ENCODE measurements at regions of chr20 and their contacts with region 1.

Region 1: GRCh38 chr20:34768096-34768495 is 57.4 kb downstream of the NCOA6 start:
- DNase-seq: no peak
- H3K4me3 Mint-ChIP-seq: no peak overlapping the region
- H3K27ac Mint-ChIP-seq: no peak overlapping the region
- H3K4me1 Mint-ChIP-seq: no peaks in the 10 kb centered on the region
- H3K27me3 Mint-ChIP-seq: no peaks in the 10 kb centered on the region

Region 2: GRCh38 chr20:34753706-34754461 is 14.2 kb before region 1 on chr20:
- CTCF ChIA-PET with region 1: interaction called, 11 read pairs
- POLR2A ChIA-PET with region 1: no interaction called
- DNase-seq: no peak
- H3K4me3 Mint-ChIP-seq: no peak overlapping the region
- H3K27ac Mint-ChIP-seq: no peak overlapping the region
- H3K4me1 Mint-ChIP-seq: no peaks in the 10 kb centered on the region
- H3K27me3 Mint-ChIP-seq: no peaks in the 10 kb centered on the region

Region 3: GRCh38 chr20:34904202-34904621 is 136.1 kb after region 1 on chr20:
- CTCF ChIA-PET with region 1: no interaction called
- POLR2A ChIA-PET with region 1: no interaction called
- DNase-seq: no peak
- H3K4me3 Mint-ChIP-seq: no peak overlapping the region
- H3K27ac Mint-ChIP-seq: no peak overlapping the region
- H3K4me1 Mint-ChIP-seq: peaks cover 15% of the 10 kb centered on the region
- H3K27me3 Mint-ChIP-seq: no peaks in the 10 kb centered on the region

Region 4: DNA sequence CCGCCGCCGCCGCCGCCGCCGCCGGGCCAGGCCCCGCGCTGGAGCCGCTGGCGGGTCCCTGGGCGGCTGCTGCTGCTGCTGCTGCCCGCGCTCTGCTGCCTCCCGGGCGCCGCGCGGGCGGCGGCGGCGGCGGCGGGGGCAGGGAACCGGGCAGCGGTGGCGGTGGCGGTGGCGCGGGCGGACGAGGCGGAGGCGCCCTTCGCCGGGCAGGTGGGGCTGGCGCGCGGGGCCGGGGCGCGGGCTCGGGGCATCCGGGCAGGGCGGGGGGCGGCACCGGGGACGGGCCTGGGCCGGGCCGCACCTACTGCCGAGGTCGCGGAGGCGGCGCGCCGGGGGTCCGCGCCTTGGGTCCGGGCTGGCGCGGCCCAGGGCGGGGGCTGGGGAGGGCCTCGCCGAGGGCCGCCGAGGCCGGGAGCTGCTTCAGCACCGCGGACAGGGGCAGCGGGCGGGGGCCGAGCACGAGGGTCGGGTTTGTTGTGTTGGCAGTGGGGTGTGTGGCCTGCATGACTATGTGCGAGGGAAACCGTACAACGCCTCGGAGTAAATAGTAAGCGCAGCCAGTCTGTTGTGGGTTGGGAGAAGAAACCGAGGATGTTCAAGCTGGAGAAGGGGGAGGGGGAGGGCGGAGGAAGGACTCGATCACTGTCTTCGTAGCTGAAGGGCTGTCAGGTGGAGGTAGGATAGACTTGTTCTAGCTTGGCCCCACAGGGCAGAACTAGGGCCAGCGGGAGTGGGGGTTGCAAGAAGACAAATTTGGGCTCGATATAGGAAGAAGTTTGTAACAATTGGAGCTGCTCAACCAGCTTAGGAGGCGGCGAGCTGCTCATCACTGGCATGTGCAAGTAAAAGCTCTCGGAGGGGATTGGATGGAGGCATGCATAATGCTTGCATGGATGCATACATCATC is 458.9 kb after region 1 on chr20:
- CTCF ChIA-PET with region 1: no interaction called
- POLR2A ChIA-PET with region 1: no interaction called
- DNase-seq: peak; percentile 48
- H3K4me3 Mint-ChIP-seq: peak overlapping the region; percentile 61
- H3K27ac Mint-ChIP-seq: no peak overlapping the region
- H3K4me1 Mint-ChIP-seq: peaks cover 16% of the 10 kb centered on the region
- H3K27me3 Mint-ChIP-seq: peaks cover 55% of the 10 kb centered on the region

Measured in activated CD4-positive, alpha-beta T cell treated with anti-CD3 and anti-CD28 coated beads, Interleukin-2, amount 10 ng/mL, durations not matched to agents 7 days and 5 days (primary cell).